ENCODE measurements at regions of chr4 and their contacts with region 1.

Region 1: GRCh38 chr4:98658287-98659105 is at the start of gene TSPAN5:
- DNase-seq: peak; percentile 89
- ATAC-seq: peak; percentile 84
- H3K4me3 ChIP-seq: peak within 1 kb of the TSS; percentile 34 to 92 (median 81)
- H3K4me3 Mint-ChIP-seq: peak within 1 kb of the TSS; percentile 89
- H3K27ac ChIP-seq: peak within 1 kb of the TSS; percentile 37 to 74
- H3K27ac Mint-ChIP-seq: peak within 1 kb of the TSS; percentile 75
- H3K4me1 ChIP-seq: peaks cover 27 to 33% of the 10 kb centered on the region in 2 donors
- H3K4me1 Mint-ChIP-seq: peaks cover 52% of the 10 kb centered on the region
- H3K27me3 ChIP-seq: peaks cover 0 to 10% (median 1%) of the 10 kb centered on the region in 4 experiments
- H3K27me3 Mint-ChIP-seq: peaks cover 8% of the 10 kb centered on the region
- CTCF ChIP-seq: no peak
- total RNA-seq, gene TSPAN5: 5.3 TPM in 2 replicates

Region 2: GRCh38 chr4:97819294-97819693 is 839.2 kb before region 1 on chr4:
- CTCF ChIA-PET with region 1: no interaction called
- POLR2A ChIA-PET with region 1: no interaction called
- intact Hi-C with region 1: no loop called
- DNase-seq: no peak
- ATAC-seq: no peak
- H3K4me3 ChIP-seq: no peak overlapping the region
- H3K4me3 Mint-ChIP-seq: no peak overlapping the region
- H3K27ac ChIP-seq: no peak overlapping the region
- H3K27ac Mint-ChIP-seq: no peak overlapping the region
- H3K4me1 ChIP-seq: no peaks in the 10 kb centered on the region
- H3K4me1 Mint-ChIP-seq: no peaks in the 10 kb centered on the region
- H3K27me3 ChIP-seq: no peaks in the 10 kb centered on the region
- H3K27me3 Mint-ChIP-seq: no peaks in the 10 kb centered on the region
- CTCF ChIP-seq: no peak

Region 3: DNA sequence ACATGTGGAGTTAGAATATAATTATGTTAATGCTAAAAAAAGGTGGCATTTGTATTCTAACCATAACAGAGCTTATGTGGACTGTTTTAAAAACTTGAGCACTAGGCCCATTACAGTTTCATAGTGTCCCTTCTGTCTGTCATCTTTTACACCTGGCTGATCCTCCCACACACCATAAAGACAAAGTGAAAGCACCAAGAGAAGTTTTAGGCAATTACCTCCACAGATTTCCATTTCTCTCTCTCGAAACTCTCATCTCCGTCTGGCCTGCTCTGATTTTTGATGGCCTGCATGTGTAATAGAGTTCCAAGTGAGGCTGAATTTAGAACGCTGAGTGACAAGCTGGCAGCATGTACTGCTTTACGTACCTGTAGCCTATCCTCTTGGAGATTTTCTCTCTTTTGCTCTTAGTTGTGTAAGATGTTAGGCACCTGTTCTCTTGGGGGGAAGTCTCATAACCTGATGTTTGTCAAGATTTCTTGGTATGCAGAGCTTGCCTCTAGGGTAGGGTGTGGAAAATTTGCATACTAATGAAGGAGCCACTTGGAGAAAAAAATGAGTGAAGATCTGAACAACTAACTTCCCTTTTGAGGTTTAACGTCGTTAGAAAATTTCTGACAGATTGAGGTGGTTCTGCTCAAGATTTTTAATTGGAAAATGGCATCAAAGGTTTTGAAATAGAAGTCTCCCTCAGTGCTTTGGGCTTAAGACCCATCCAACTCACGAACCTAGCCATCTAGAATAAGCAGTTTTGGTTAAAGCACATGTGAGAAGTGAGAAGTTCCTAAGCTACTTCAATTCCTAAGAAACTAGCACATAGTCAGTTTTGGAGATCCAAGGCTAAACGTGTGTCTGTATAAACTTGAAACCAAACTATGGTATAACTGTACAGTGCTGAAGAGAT is 454.9 kb before region 1 on chr4:
- CTCF ChIA-PET with region 1: interaction called, 3 read pairs
- POLR2A ChIA-PET with region 1: no interaction called
- intact Hi-C with region 1: loop called (anchors 1 kb)
- DNase-seq: peak; percentile 75
- ATAC-seq: peak; percentile 89
- H3K4me3 ChIP-seq: peak overlapping the region; percentile 32 to 64 (median 53)
- H3K4me3 Mint-ChIP-seq: peak overlapping the region; percentile 89
- H3K27ac ChIP-seq: peak overlapping the region; percentile 74 to 86
- H3K27ac Mint-ChIP-seq: peak overlapping the region; percentile 97
- H3K4me1 ChIP-seq: peaks cover 27% of the 10 kb centered on the region in 2 donors
- H3K4me1 Mint-ChIP-seq: peaks cover 35% of the 10 kb centered on the region
- H3K27me3 ChIP-seq: no peaks in the 10 kb centered on the region
- H3K27me3 Mint-ChIP-seq: no peaks in the 10 kb centered on the region
- CTCF ChIP-seq: no peak

Region 4: DNA sequence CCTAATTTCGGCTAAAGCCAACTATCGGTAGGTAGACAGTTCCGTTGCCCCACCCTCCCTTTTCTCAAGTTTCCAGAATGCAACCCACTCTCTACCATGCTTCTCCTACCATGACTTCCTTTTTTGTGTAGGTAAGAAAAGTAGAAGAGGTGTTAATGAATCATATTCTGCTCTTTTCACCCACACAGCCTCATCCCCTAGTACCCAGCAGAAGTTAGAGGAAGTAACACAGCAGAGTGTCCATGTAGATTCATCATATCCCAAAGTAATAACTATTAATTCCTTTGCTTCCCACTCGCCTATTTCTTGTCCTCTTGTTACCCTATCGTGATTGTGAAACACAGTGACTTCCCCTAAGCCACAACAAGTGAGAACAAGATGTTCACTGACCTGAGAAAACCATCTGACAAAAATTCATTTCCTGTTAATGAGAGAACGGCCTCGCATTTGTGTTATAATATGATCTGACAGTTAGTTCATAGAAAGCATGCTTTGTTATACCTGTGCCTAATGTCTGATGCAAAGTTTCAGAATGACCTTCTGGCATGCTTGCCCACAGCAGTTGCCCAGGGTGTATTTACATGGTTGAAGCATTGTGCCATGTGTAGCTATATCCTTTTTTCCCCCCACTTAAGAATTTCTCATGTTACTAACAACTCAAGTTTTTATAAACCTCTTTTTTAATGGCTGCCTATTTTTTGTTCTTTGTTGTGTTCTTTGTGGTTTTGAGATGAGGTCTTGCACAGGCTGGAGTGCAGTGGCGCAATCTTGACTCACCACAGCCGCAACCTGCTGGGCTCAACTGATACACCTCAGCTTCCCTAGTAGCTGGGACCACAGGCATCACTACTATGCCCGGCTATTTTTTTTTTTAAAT is 211.8 kb before region 1 on chr4:
- CTCF ChIA-PET with region 1: no interaction called
- POLR2A ChIA-PET with region 1: no interaction called
- intact Hi-C with region 1: loop called (anchors 10 kb)
- DNase-seq: peak; percentile 75
- ATAC-seq: peak; percentile 72
- H3K4me3 ChIP-seq: peak overlapping the region in 4 of 5 experiments; percentile 32 to 53 (median 48)
- H3K4me3 Mint-ChIP-seq: peak overlapping the region; percentile 75
- H3K27ac ChIP-seq: peak overlapping the region; percentile 69 to 70
- H3K27ac Mint-ChIP-seq: peak overlapping the region; percentile 93
- H3K4me1 ChIP-seq: peaks cover 35 to 42% of the 10 kb centered on the region in 2 donors
- H3K4me1 Mint-ChIP-seq: peaks cover 45% of the 10 kb centered on the region
- H3K27me3 ChIP-seq: no peaks in the 10 kb centered on the region
- H3K27me3 Mint-ChIP-seq: no peaks in the 10 kb centered on the region
- CTCF ChIP-seq: no peak

Region 5: DNA sequence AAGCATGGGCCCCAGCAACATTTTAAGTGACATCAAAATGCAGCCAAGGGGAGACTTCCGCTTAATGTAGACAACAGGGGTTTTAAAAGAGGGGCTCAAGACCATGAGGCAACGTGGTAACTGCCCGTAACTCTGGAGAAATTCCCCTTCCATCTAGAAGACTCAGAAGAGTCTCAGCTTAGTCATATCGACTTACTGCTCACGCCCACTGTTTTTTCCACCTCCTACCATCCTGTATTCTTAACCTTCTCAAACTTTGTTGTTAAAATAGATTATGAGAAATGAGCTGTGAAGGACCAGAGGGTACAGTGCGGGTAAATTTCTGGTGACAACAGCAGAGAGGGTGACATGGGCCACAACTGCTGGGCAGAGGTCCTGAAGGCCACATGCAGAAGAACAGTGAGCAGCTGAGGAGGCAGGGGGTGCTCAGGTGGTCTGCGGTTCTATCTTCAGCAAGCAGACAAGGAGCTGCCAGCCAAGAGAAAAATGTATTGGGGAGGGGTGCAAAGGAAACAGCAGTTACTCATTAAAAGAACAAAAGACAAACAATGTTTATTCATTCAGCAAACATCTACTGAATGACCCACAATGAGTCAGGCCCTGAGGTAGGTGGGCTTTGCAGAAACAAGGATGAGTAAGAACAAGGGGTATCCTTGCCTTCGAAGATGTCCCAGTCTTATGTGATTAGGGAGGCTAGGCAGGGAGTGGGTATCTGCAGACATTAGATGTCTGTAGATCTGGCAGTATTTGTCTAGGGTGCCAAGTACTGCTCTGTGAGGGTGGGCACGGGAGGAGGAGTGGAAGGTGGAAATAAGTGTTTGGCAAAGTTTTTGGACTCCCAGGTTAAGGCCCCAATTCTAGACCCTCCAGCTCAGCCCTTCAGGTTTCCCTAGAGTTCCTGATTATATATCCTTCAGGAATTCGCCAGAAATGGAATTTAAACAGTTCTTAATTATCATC is 175.4 kb before region 1 on chr4:
- CTCF ChIA-PET with region 1: no interaction called
- POLR2A ChIA-PET with region 1: no interaction called
- intact Hi-C with region 1: no loop called
- DNase-seq: no peak
- ATAC-seq: no peak
- H3K4me3 ChIP-seq: no peak overlapping the region
- H3K4me3 Mint-ChIP-seq: no peak overlapping the region
- H3K27ac ChIP-seq: no peak overlapping the region
- H3K27ac Mint-ChIP-seq: peak overlapping the region; percentile 29
- H3K4me1 ChIP-seq: peaks cover 7 to 9% of the 10 kb centered on the region in 2 donors
- H3K4me1 Mint-ChIP-seq: peaks cover 13% of the 10 kb centered on the region
- H3K27me3 ChIP-seq: no peaks in the 10 kb centered on the region
- H3K27me3 Mint-ChIP-seq: no peaks in the 10 kb centered on the region
- CTCF ChIP-seq: no peak

Region 6: DNA sequence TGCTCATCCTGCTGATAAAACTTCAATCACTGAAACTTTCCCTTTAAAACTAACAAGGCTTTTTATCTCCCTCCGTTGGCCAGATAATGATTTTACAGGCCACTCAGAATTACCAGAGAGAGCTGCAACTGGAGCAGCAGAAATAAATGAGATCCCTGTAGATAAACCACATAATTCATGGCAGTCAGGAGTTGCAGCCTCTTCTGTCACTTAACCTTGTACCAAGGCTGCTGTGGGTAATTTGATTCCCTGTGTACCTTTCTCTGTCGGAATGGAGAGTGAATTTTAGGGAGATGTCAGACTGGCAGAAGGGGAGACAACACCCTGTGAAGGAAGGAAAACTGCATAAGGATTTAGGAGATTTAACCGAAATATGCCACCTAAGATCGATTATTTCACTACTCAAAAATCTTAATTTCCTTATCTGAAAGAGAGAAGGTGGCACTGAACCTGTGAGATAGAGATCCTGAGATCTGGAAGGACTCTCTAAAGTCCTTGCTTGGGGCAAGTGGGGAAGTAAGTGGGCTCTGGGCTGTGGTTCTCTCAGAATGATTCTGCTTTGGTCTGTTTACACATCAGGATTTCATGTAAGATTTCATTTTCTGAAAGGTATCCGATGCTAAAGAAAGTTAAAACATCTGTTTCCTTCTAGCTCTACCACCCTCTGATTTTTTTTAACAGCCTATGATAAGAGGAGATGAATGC is 14.2 kb after region 1 on chr4:
- CTCF ChIA-PET with region 1: no interaction called
- POLR2A ChIA-PET with region 1: no interaction called
- intact Hi-C with region 1: no loop called
- DNase-seq: no peak
- ATAC-seq: no peak
- H3K4me3 ChIP-seq: peak overlapping the region in 1 of 5 experiments; percentile 16
- H3K4me3 Mint-ChIP-seq: no peak overlapping the region
- H3K27ac ChIP-seq: no peak overlapping the region
- H3K27ac Mint-ChIP-seq: peak overlapping the region; percentile 34
- H3K4me1 ChIP-seq: peaks cover 8 to 9% of the 10 kb centered on the region in 2 donors
- H3K4me1 Mint-ChIP-seq: peaks cover 6% of the 10 kb centered on the region
- H3K27me3 ChIP-seq: no peaks in the 10 kb centered on the region
- H3K27me3 Mint-ChIP-seq: peaks cover 37% of the 10 kb centered on the region
- CTCF ChIP-seq: no peak

Region 7: GRCh38 chr4:99088481-99089365 is 430.2 kb after region 1 on chr4 and contains the start of gene ADH5:
- CTCF ChIA-PET with region 1: no interaction called
- POLR2A ChIA-PET with region 1: no interaction called
- intact Hi-C with region 1: loop called (anchors 2 kb)
- DNase-seq: peak; percentile 90
- ATAC-seq: peak; percentile 95
- H3K4me3 ChIP-seq: peak within 1 kb of the TSS; percentile 75 to 99 (median 96)
- H3K4me3 Mint-ChIP-seq: peak within 1 kb of the TSS; percentile 98
- H3K27ac ChIP-seq: peak within 1 kb of the TSS; percentile 84
- H3K27ac Mint-ChIP-seq: peak within 1 kb of the TSS; percentile 98
- H3K4me1 ChIP-seq: peaks cover 15 to 25% of the 10 kb centered on the region in 2 donors
- H3K4me1 Mint-ChIP-seq: peaks cover 46% of the 10 kb centered on the region
- H3K27me3 ChIP-seq: no peaks in the 10 kb centered on the region
- H3K27me3 Mint-ChIP-seq: no peaks in the 10 kb centered on the region
- CTCF ChIP-seq: no peak
- total RNA-seq, gene ADH5: 59.2 and 65.6 TPM in 2 replicates

Measured in B cell (primary cell).